Activated CD4-positive, alpha-beta memory T cell treated with anti-CD3 and anti-CD28 coated beads for 36 hours (primary cell): ENCODE measurements at regions of chrX and their contacts with region 1.

Region 1: GRCh38 chrX:54044126-54044876 is at the start of gene PHF8:
- DNase-seq: peak; percentile 96
- H3K4me3 Mint-ChIP-seq: peak within 1 kb of the TSS; percentile 91
- H3K27ac Mint-ChIP-seq: peak within 1 kb of the TSS; percentile 96
- H3K4me1 Mint-ChIP-seq: peaks cover 21% of the 10 kb centered on the region
- H3K27me3 Mint-ChIP-seq: no peaks in the 10 kb centered on the region
- total RNA-seq, gene PHF8: 51.2 to 52.0 TPM

Region 2: GRCh38 chrX:53422086-53422860 is 622.0 kb before region 1 on chrX and contains the start of gene SMC1A:
- CTCF ChIA-PET with region 1: no interaction called
- POLR2A ChIA-PET with region 1: no interaction called
- intact Hi-C with region 1: loop called (anchors 10 kb)
- DNase-seq: peak; percentile 97
- H3K4me3 Mint-ChIP-seq: peak within 1 kb of the TSS; percentile 90
- H3K27ac Mint-ChIP-seq: peak within 1 kb of the TSS; percentile 97
- H3K4me1 Mint-ChIP-seq: peaks cover 24% of the 10 kb centered on the region
- H3K27me3 Mint-ChIP-seq: no peaks in the 10 kb centered on the region
- total RNA-seq, gene SMC1A: 148 to 161 TPM

Region 3: GRCh38 chrX:54357414-54358377 is 313.4 kb after region 1 on chrX and contains the start of gene WNK3:
- CTCF ChIA-PET with region 1: no interaction called
- POLR2A ChIA-PET with region 1: no interaction called
- intact Hi-C with region 1: loop called (anchors 2 kb)
- DNase-seq: peak; percentile 51
- H3K4me3 Mint-ChIP-seq: peak within 1 kb of the TSS; percentile 75
- H3K27ac Mint-ChIP-seq: no peak within 1 kb of the TSS
- H3K4me1 Mint-ChIP-seq: peaks cover 19% of the 10 kb centered on the region
- H3K27me3 Mint-ChIP-seq: peaks cover 28% of the 10 kb centered on the region
- total RNA-seq, gene WNK3: 0.19 to 0.46 TPM

Region 4: DNA sequence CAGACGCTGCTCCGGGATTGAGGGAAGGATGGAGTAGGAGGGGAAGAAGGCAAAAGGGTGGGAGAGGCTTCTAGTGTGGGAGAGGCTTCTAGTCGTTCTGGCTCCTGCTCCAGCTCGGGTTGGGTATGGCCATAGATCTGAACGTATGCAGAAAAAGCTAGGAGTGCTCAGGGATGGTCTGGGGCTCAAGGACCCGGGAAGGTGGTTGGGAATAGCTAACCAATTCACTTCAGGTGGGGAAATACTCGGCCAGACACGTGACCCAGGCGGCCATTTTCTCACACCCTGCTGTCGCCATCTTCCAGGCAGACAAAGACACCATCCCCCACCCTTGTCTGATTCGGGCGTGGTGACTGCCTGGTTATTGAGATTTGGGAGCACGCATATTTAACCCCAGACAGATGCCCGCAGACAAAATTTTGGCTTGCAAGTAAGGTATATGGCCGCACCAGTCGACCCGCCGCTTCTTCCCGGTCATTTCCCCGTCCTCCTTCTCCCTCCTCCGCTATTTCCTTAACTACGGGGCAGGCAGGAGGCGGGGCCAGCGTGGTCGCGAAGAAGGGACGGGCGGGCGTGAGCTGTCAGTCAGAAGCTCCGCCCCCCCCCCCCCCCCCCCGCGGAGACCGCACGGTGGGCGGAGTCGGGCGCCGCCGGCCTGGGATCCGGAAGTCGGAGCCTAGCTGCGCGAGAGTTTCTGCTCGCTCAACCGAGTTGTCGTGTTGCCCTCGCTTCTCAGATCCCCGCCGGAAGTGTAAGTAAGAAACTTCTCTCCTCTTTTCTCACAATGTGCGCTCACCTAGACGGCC is 485.5 kb after region 1 on chrX and contains the start of gene GNL3L:
- CTCF ChIA-PET with region 1: no interaction called
- POLR2A ChIA-PET with region 1: interaction called, 3 read pairs
- intact Hi-C with region 1: loop called (anchors 1 kb)
- DNase-seq: peak; percentile 89
- H3K4me3 Mint-ChIP-seq: peak within 1 kb of the TSS; percentile 89
- H3K27ac Mint-ChIP-seq: peak within 1 kb of the TSS; percentile 91
- H3K4me1 Mint-ChIP-seq: peaks cover 36% of the 10 kb centered on the region
- H3K27me3 Mint-ChIP-seq: no peaks in the 10 kb centered on the region
- total RNA-seq, gene GNL3L: 45.8 to 45.9 TPM

Region 5: DNA sequence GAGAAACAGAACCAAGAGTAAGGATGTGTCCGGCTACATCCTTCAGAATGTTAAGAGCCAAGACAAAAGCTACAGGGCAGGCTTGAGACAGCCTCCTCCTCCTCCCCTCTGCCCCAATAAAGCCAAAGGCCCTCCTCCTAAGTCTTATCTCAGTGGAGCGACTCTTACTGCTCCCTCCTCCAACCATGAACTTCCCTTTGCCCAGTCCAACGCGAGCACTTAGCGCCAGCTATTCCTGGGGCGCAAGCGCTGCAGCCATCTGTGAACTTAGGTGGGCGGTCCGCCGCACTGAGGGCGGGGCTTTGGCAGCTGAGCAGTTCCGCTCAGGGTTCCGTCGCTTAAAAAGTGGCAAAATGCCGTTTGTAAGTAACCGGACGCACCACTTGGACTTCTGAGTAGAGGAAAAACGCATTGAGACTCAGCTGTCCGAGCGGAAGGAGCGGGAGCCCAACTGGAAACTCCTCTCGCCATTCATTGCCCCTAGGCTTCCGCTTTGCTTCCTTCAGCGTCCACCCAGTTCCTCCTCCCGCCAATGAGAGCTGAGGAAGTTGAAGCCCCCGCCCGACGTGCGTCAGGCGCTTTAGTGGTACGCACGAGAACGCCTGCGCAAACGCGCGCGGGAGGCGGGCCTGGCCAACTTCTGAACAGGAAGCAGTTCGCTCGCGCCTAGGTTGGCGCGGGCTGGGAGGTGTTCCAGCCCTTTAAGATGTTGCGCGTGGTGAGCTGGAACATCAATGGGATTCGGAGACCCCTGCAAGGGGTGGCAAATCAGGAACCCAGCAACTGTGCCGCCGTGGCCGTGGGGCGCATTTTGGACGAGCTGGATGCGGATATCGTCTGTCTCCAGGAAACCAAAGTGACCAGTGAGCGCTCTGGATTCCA is 955.7 kb after region 1 on chrX and contains the start of gene APEX2:
- CTCF ChIA-PET with region 1: no interaction called
- POLR2A ChIA-PET with region 1: no interaction called
- intact Hi-C with region 1: loop called (anchors 5 kb)
- DNase-seq: peak; percentile 92
- H3K4me3 Mint-ChIP-seq: peak within 1 kb of the TSS; percentile 92
- H3K27ac Mint-ChIP-seq: peak within 1 kb of the TSS; percentile 87
- H3K4me1 Mint-ChIP-seq: peaks cover 17% of the 10 kb centered on the region
- H3K27me3 Mint-ChIP-seq: no peaks in the 10 kb centered on the region
- total RNA-seq, gene APEX2: 32.7 to 32.9 TPM